ENCODE measurements at regions of chr7 and their contacts with region 1.

Region 1: DNA sequence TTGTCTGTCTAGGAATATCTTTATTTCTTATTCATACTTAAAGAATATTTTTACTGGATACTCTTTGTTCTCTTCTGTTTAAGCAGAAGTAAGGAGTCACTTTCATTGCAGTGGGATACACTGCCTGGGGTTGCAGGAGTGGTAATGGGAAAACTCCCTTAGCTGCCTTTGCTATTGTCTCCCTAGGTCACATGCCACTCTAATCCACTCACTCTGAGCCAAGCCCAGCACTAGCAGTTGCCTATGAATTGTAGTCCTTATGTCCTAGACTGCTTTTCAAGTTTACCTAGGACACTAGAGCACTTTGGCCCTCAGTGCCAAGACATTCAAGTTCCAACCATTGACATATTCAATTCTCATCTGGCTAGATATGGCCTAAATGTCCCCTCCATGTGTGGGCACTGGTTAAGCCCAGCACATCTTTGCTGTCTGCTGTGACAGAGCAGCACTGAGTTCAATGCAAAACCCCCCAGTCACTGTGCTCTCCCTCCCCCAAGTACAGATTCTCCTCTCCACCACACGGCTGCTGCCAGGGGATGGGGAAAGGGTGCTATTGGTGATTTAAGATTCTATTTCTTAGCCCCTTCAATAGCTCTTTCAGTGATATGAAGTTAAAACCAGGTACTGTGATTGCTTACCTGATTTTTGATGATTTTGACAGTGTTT is 991.7 kb upstream of the KCND2 start:
- DNase-seq: no peak
- ATAC-seq: no peak
- H3K4me3 ChIP-seq: no peak overlapping the region
- H3K4me3 Mint-ChIP-seq: no peak overlapping the region
- H3K27ac ChIP-seq: no peak overlapping the region
- H3K27ac Mint-ChIP-seq: no peak overlapping the region
- H3K4me1 ChIP-seq: no peaks in the 10 kb centered on the region
- H3K4me1 Mint-ChIP-seq: no peaks in the 10 kb centered on the region
- H3K27me3 ChIP-seq: no peaks in the 10 kb centered on the region
- H3K27me3 Mint-ChIP-seq: no peaks in the 10 kb centered on the region
- CTCF ChIP-seq: no peak

Region 2: GRCh38 chr7:118461742-118462141 is 819.6 kb before region 1 on chr7:
- CTCF ChIA-PET with region 1: no interaction called
- POLR2A ChIA-PET with region 1: no interaction called
- intact Hi-C with region 1: no loop called
- DNase-seq: no peak
- ATAC-seq: no peak
- H3K4me3 ChIP-seq: no peak overlapping the region
- H3K4me3 Mint-ChIP-seq: no peak overlapping the region
- H3K27ac ChIP-seq: no peak overlapping the region
- H3K27ac Mint-ChIP-seq: no peak overlapping the region
- H3K4me1 ChIP-seq: no peaks in the 10 kb centered on the region
- H3K4me1 Mint-ChIP-seq: no peaks in the 10 kb centered on the region
- H3K27me3 ChIP-seq: no peaks in the 10 kb centered on the region
- H3K27me3 Mint-ChIP-seq: no peaks in the 10 kb centered on the region
- CTCF ChIP-seq: no peak

Region 3: DNA sequence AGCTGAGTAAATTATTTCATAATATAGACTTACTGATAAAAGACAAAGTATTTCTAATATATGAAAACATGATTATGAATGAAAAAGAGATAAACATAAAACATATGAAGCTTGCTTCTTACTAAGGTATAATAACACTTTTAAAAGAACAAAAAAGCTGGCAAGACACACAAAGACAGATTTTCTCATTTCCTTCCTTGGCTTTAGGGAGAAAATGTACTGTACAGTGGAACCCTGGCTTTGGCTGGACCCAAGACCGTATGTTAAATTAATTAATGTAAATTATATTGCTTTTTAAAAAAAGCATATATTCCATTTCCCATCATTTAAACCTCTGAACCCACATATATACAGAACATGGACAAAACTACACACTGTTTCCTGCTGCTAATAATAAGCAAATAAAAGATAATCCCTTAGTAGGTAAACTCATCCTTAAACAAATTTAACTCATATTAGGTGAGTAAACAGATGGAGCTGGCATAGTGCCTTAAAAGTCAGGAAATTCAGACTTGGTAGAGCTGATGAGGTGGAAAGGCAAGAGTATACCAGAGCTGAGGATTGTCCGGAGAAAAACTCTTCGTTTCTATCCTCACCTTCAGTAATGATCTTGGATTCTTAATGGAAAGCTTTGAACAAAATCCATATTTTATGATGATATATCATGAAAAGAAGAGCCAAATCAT is 24.7 kb before region 1 on chr7:
- CTCF ChIA-PET with region 1: no interaction called
- POLR2A ChIA-PET with region 1: no interaction called
- intact Hi-C with region 1: loop called in 1 of 2 experiments (anchors 2 kb)
- DNase-seq: no peak
- ATAC-seq: no peak
- H3K4me3 ChIP-seq: no peak overlapping the region
- H3K4me3 Mint-ChIP-seq: no peak overlapping the region
- H3K27ac ChIP-seq: no peak overlapping the region
- H3K27ac Mint-ChIP-seq: no peak overlapping the region
- H3K4me1 ChIP-seq: no peaks in the 10 kb centered on the region
- H3K4me1 Mint-ChIP-seq: no peaks in the 10 kb centered on the region
- H3K27me3 ChIP-seq: no peaks in the 10 kb centered on the region
- H3K27me3 Mint-ChIP-seq: no peaks in the 10 kb centered on the region
- CTCF ChIP-seq: no peak